ENCODE measurements at regions of chr17 and their contacts with region 1.

Region 1: DNA sequence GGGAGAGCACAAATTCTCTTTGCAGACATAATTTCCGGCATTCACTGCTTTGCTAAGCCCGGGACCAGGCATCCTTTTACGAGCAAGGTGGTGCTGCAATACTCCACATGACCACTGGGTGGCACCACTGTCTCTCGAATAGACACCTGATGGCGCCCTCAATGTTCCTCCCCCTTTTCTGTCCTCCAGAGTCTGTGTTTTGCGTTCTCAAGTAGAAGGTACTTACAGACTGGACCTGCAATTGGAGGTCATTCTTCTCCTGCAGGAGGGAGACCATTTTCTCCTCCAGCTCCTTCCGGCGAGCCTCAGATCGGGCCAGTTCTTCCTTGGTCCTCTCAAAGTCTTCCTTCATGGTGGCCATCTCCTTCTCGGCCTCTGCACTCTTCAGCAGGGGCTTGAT is 45.2 kb downstream of the MYH13 start:
- DNase-seq: no peak
- H3K4me3 ChIP-seq: no peak overlapping the region
- CTCF ChIP-seq: peak; percentile 85

Region 2: GRCh38 chr17:10295728-10296343 is 31.8 kb before region 1 on chr17:
- CTCF ChIA-PET with region 1: interaction called, 12 read pairs
- POLR2A ChIA-PET with region 1: no interaction called
- DNase-seq: no peak
- H3K4me3 ChIP-seq: no peak overlapping the region
- CTCF ChIP-seq: peak; percentile 74

Region 3: GRCh38 chr17:10316801-10317542 is 10.7 kb before region 1 on chr17:
- CTCF ChIA-PET with region 1: interaction called, 76 read pairs
- POLR2A ChIA-PET with region 1: no interaction called
- DNase-seq: no peak
- H3K4me3 ChIP-seq: no peak overlapping the region
- CTCF ChIP-seq: peak; percentile 69

Region 4: DNA sequence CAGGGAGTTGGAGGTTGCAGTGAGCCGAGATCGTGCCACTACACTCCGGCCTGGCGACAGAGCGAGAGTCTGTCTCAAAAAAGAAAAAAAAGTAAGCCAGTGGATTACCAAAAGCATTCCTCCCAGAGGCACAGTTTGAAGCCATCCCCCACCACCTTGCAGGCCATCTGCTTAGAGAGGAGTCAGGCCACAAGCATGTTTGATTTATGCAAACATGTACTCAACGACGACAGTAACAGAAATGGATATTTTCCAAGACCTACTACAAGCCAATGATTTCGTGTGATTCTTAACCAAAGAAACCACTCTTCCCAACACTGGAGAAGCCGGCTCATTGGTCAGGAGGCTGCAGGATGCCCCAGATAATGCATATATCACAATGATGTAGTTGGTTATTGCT is 10.3 kb after region 1 on chr17:
- CTCF ChIA-PET with region 1: interaction called, 26 read pairs
- POLR2A ChIA-PET with region 1: no interaction called
- DNase-seq: peak; percentile 72
- H3K4me3 ChIP-seq: no peak overlapping the region
- CTCF ChIP-seq: no peak

Region 5: GRCh38 chr17:10357768-10358167 is 30.1 kb after region 1 on chr17:
- CTCF ChIA-PET with region 1: no interaction called
- POLR2A ChIA-PET with region 1: no interaction called
- DNase-seq: no peak
- H3K4me3 ChIP-seq: no peak overlapping the region
- CTCF ChIP-seq: peak; percentile 41

Region 6: DNA sequence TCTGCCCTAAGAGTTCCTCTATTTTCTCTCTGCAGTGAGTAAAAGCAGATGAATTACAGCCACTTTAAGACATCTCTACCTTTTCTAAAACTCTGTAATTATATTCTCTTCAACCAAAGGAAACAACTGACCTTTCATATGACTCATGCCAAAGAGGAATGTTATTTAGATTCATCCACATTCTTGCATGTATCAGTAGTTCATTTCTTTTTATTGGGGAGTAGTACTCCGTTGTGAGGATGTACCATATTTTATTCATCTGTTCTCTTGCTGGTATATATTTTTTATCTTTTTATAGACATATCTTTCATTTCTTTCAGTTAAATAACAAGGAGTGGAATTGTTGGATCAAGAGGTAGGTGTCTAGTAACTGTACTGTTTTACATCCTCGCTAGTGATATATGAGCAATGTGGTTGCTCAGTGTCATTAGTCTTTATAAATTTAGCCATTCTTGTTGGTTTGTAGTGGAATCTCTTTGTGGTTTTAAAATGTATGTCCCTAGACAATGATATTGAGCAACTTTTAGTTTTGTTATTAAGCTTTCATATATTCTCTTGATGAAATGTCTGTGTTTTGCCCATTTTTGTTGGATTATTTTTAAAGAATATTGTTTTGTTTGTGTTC is 101.9 kb after region 1 on chr17:
- CTCF ChIA-PET with region 1: no interaction called
- POLR2A ChIA-PET with region 1: no interaction called
- DNase-seq: no peak
- H3K4me3 ChIP-seq: no peak overlapping the region
- CTCF ChIP-seq: no peak

Measured in AG04449 (cell line).